ENCODE measurements at regions of chr1 and their contacts with region 1.

Region 1: GRCh38 chr1:27116697-27117096 is 38.2 kb downstream of the SLC9A1 start:
- DNase-seq: no peak

Region 2: DNA sequence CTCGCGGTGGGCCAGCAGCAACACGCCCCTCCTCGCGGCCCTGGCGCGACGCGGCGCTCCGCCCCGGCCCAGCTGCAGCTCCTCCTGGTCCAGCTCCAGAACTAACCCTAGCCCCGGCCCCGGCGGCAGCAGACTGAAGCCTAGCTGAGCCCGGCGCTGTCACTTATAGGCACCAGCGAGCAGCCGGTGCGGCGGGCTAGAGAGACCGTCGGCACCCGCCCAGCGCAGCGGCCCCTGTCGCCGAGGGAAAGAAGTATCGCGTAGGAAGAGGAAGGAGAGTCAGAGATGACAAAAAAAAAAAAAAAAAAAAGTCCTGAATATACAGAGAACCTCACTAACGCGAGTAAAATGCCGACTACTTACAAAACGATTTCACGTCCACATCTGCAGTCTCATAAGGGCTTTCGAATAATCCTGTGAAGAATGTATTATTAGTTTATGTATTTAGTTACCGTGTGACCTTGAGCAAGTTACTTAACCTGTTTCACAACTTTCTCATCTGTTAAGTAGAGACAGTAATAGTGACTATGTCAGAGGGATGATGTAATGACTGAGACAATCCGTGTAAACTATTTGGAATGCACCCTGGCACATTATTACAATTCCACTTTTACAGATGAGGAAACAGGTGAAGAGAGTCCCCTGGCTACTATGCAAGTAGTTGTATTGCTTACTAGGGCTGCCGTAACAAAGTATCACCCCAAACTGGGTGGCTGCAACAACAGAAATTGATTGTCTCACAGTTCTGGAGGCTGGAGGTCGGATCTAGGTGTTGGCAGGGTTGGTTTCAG is 38.5 kb after region 1 on chr1 and contains the start of gene SLC9A1:
- intact Hi-C with region 1: loop called (anchors 5 kb)
- DNase-seq: peak; percentile 92 to 99 (median 96)